HepG2 (cell line): ENCODE measurements at regions of chr1 and their contacts with region 1.

Region 1: GRCh38 chr1:215146341-215146826 is 63.8 kb downstream of the KCNK2 start:
- DNase-seq: peak; percentile 24
- ATAC-seq: no peak; the same call in 2 of the 3 replicates
- H3K4me3 ChIP-seq: no peak overlapping the region
- H3K27ac ChIP-seq: no peak overlapping the region
- H3K4me1 ChIP-seq: no peaks in the 10 kb centered on the region
- H3K27me3 ChIP-seq: no peaks in the 10 kb centered on the region
- CTCF ChIP-seq: peak; percentile 50
- EP300 ChIP-seq: no peak
- POLR2A ChIP-seq: no peak
- RAD21 ChIP-seq: no peak

Region 2: GRCh38 chr1:214660862-214661261 is 485.5 kb before region 1 on chr1:
- CTCF ChIA-PET with region 1: interaction called, 4 read pairs
- POLR2A ChIA-PET with region 1: no interaction called
- in situ Hi-C with region 1: loop called (anchors 5 kb)
- intact Hi-C with region 1: no loop called
- DNase-seq: peak; percentile 6
- ATAC-seq: peak; percentile 78
- H3K4me3 ChIP-seq: no peak overlapping the region
- H3K27ac ChIP-seq: no peak overlapping the region
- H3K4me1 ChIP-seq: no peaks in the 10 kb centered on the region
- H3K27me3 ChIP-seq: no peaks in the 10 kb centered on the region
- CTCF ChIP-seq: peak; percentile 61
- EP300 ChIP-seq: no peak
- POLR2A ChIP-seq: no peak
- RAD21 ChIP-seq: peak; percentile 31; the same call in 1 of the 2 replicates

Region 3: DNA sequence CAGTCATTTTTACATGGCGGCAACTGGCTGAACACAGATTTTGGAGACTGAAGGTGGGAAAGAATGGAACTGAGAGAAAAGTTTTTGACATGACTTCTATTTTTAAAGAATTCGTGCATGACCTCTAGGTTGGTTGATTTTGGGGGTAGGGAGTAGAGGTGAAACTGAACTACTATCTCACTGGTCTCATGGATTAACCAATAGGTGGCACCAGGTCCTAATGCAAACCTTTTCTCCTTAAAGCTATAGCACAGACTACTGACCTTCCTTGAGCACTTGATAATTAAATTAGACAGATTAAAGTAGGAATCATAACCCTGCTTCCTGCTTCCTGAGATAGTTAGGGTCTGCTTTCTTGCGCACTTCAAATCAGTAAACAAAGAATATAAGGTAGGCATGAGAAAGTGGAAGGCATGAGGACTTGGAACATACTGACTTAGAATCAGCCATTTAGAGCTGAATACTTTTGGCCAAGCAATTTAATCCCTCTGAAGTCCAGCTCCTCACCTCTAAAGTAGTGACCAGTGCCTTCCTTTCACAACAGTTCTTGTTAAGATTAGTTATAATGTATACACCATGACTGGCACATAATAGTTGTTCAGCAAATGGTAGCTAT is 337.4 kb before region 1 on chr1:
- CTCF ChIA-PET with region 1: no interaction called
- POLR2A ChIA-PET with region 1: no interaction called
- in situ Hi-C with region 1: loop called (anchors 10 kb)
- intact Hi-C with region 1: loop called (anchors 1 kb)
- DNase-seq: peak; percentile 22
- ATAC-seq: peak; percentile 53; the same call in 1 of the 3 replicates
- H3K4me3 ChIP-seq: no peak overlapping the region
- H3K27ac ChIP-seq: no peak overlapping the region
- H3K4me1 ChIP-seq: no peaks in the 10 kb centered on the region
- H3K27me3 ChIP-seq: no peaks in the 10 kb centered on the region
- CTCF ChIP-seq: peak; percentile 40; the same call in 1 of the 2 replicates
- EP300 ChIP-seq: no peak
- POLR2A ChIP-seq: no peak
- RAD21 ChIP-seq: no peak

Region 4: GRCh38 chr1:215056584-215056983 is 89.8 kb before region 1 on chr1:
- CTCF ChIA-PET with region 1: no interaction called
- POLR2A ChIA-PET with region 1: no interaction called
- in situ Hi-C with region 1: no loop called
- intact Hi-C with region 1: no loop called
- DNase-seq: no peak
- ATAC-seq: no peak
- H3K4me3 ChIP-seq: no peak overlapping the region
- H3K27ac ChIP-seq: no peak overlapping the region
- H3K4me1 ChIP-seq: no peaks in the 10 kb centered on the region
- H3K27me3 ChIP-seq: no peaks in the 10 kb centered on the region
- CTCF ChIP-seq: no peak
- EP300 ChIP-seq: no peak
- POLR2A ChIP-seq: no peak
- RAD21 ChIP-seq: no peak

Region 5: GRCh38 chr1:215114154-215114933 is 32.0 kb before region 1 on chr1:
- CTCF ChIA-PET with region 1: no interaction called
- POLR2A ChIA-PET with region 1: no interaction called
- in situ Hi-C with region 1: no loop called
- intact Hi-C with region 1: no loop called
- DNase-seq: no peak
- ATAC-seq: no peak
- H3K4me3 ChIP-seq: no peak overlapping the region
- H3K27ac ChIP-seq: no peak overlapping the region
- H3K4me1 ChIP-seq: no peaks in the 10 kb centered on the region
- H3K27me3 ChIP-seq: no peaks in the 10 kb centered on the region
- CTCF ChIP-seq: no peak
- EP300 ChIP-seq: no peak
- POLR2A ChIP-seq: no peak
- RAD21 ChIP-seq: no peak

Region 6: GRCh38 chr1:215210167-215210566 is 63.8 kb after region 1 on chr1:
- CTCF ChIA-PET with region 1: no interaction called
- POLR2A ChIA-PET with region 1: no interaction called
- in situ Hi-C with region 1: no loop called
- intact Hi-C with region 1: no loop called
- DNase-seq: no peak
- ATAC-seq: no peak
- H3K4me3 ChIP-seq: no peak overlapping the region
- H3K27ac ChIP-seq: no peak overlapping the region
- H3K4me1 ChIP-seq: no peaks in the 10 kb centered on the region
- H3K27me3 ChIP-seq: no peaks in the 10 kb centered on the region
- CTCF ChIP-seq: no peak
- EP300 ChIP-seq: no peak
- POLR2A ChIP-seq: no peak
- RAD21 ChIP-seq: no peak